Endothelial cell of umbilical vein (primary cell): ENCODE measurements at regions of chr9 and their contacts with region 1.

Region 1: GRCh38 chr9:5268890-5269715 is 35.4 kb downstream of the RLN2 start:
- DNase-seq: peak; percentile 90
- H3K4me3 ChIP-seq: no peak overlapping the region
- H3K27ac ChIP-seq: peak overlapping the region; percentile 99
- H3K4me1 ChIP-seq: peaks cover 24% of the 10 kb centered on the region
- H3K27me3 ChIP-seq: no peaks in the 10 kb centered on the region
- CTCF ChIP-seq: no peak
- POLR2A ChIP-seq: no peak

Region 2: DNA sequence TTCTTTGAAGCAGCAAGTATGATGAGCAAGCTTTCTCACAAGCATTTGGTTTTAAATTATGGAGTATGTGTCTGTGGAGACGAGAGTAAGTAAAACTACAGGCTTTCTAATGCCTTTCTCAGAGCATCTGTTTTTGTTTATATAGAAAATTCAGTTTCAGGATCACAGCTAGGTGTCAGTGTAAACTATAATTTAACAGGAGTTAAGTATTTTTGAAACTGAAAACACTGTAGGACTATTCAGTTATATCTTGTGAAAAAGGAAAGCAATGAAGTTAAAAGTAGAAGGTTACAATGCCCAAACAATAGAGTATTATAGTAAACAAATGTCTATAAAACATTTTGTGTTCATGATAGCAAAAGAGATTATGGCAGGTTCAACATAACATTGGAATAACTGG is 195.4 kb before region 1 on chr9:
- CTCF ChIA-PET with region 1: no interaction called
- POLR2A ChIA-PET with region 1: no interaction called
- dilution Hi-C with region 1: no loop called
- intact Hi-C with region 1: no loop called
- DNase-seq: no peak
- H3K4me3 ChIP-seq: no peak overlapping the region
- H3K27ac ChIP-seq: no peak overlapping the region
- H3K4me1 ChIP-seq: peaks cover 11% of the 10 kb centered on the region
- H3K27me3 ChIP-seq: no peaks in the 10 kb centered on the region
- CTCF ChIP-seq: no peak
- POLR2A ChIP-seq: no peak

Region 3: GRCh38 chr9:5375091-5375490 is 106.0 kb after region 1 on chr9:
- CTCF ChIA-PET with region 1: no interaction called
- POLR2A ChIA-PET with region 1: no interaction called
- dilution Hi-C with region 1: no loop called
- intact Hi-C with region 1: loop called (anchors 1 kb)
- DNase-seq: peak; percentile 6
- H3K4me3 ChIP-seq: no peak overlapping the region
- H3K27ac ChIP-seq: peak overlapping the region; percentile 87
- H3K4me1 ChIP-seq: peaks cover 20% of the 10 kb centered on the region
- H3K27me3 ChIP-seq: no peaks in the 10 kb centered on the region
- CTCF ChIP-seq: no peak
- POLR2A ChIP-seq: no peak

Region 4: DNA sequence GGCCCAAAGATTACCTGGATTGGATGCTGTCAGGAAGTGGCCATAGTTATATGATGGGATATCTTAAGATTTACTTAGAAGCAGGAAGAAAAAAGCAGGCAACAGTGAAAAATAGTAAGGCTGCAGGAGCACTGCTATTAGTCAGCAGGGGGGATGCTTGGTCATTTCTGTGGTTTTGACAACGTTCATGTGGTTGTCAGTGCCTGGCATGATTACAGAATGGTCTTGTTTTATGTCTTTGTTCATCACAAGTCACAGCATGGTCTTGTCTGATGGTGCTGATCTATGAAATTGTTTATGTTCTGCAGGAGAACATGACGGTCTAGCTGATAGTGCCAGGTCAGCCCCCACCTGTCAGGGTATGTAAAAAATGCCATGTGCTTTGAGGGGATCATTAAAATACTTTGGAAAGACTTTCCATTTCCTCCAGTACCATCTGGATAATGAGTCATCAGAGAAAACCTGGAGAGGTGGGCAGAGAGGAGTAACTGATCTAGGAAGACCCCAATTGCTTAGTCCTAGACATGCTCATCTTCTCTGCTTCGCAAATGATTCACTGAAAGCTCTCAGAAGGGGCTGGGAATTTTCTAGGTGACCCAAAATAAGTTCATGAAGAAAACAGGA is 120.1 kb after region 1 on chr9:
- CTCF ChIA-PET with region 1: no interaction called
- POLR2A ChIA-PET with region 1: no interaction called
- dilution Hi-C with region 1: no loop called
- intact Hi-C with region 1: loop called (anchors 1 kb)
- DNase-seq: no peak
- H3K4me3 ChIP-seq: no peak overlapping the region
- H3K27ac ChIP-seq: no peak overlapping the region
- H3K4me1 ChIP-seq: peaks cover 11% of the 10 kb centered on the region
- H3K27me3 ChIP-seq: no peaks in the 10 kb centered on the region
- CTCF ChIP-seq: no peak
- POLR2A ChIP-seq: no peak

Region 5: DNA sequence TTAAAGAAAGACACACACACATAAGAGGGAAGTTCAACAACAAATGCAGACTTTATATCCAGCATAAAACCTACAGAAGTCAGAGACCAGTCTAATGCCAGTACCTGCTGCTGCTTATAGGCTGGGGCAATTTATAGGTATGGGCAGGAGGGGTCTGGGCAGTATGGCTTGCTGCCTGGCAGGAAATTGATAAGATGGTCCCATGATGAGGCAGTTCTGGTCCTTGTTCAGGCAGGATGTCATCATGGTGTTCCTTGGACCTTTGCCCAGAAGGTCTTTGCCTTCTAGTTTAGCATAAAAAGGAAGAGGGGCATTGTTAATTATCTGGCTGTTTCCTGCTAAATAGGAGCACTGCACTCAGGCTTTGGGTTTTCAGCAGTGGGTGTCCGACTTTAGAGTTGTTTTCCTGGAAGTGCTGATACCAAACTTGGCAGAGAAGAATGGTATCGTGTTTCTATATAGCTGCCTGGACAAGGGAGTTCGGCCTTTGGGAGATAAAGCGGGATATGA is 230.8 kb after region 1 on chr9:
- CTCF ChIA-PET with region 1: no interaction called
- POLR2A ChIA-PET with region 1: no interaction called
- dilution Hi-C with region 1: no loop called
- intact Hi-C with region 1: loop called (anchors 1 kb)
- DNase-seq: peak; percentile 97
- H3K4me3 ChIP-seq: no peak overlapping the region
- H3K27ac ChIP-seq: peak overlapping the region; percentile 89
- H3K4me1 ChIP-seq: peaks cover 33% of the 10 kb centered on the region
- H3K27me3 ChIP-seq: no peaks in the 10 kb centered on the region
- CTCF ChIP-seq: no peak
- POLR2A ChIP-seq: peak; percentile 95

Region 6: GRCh38 chr9:5582835-5583195 is 313.7 kb after region 1 on chr9:
- CTCF ChIA-PET with region 1: no interaction called
- POLR2A ChIA-PET with region 1: no interaction called
- dilution Hi-C with region 1: no loop called
- intact Hi-C with region 1: loop called (anchors 2 kb)
- DNase-seq: no peak
- H3K4me3 ChIP-seq: no peak overlapping the region
- H3K27ac ChIP-seq: peak overlapping the region; percentile 10
- H3K4me1 ChIP-seq: peaks cover 36% of the 10 kb centered on the region
- H3K27me3 ChIP-seq: no peaks in the 10 kb centered on the region
- CTCF ChIP-seq: no peak
- POLR2A ChIP-seq: no peak

Region 7: GRCh38 chr9:5628530-5629311 is 359.6 kb after region 1 on chr9 and contains the start of gene RIC1:
- CTCF ChIA-PET with region 1: no interaction called
- POLR2A ChIA-PET with region 1: no interaction called
- dilution Hi-C with region 1: no loop called
- intact Hi-C with region 1: loop called (anchors 1 kb)
- DNase-seq: peak; percentile 94
- H3K4me3 ChIP-seq: peak within 1 kb of the TSS; percentile 91 to 99 (median 93)
- H3K27ac ChIP-seq: peak within 1 kb of the TSS; percentile 85
- H3K4me1 ChIP-seq: peaks cover 32% of the 10 kb centered on the region
- H3K27me3 ChIP-seq: no peaks in the 10 kb centered on the region
- CTCF ChIP-seq: no peak
- POLR2A ChIP-seq: peak; percentile 98
- total RNA-seq, gene RIC1: 23.5 and 24.8 TPM in 2 replicates